GM12878 (cell line): ENCODE measurements at regions of chr2 and their contacts with region 1.

Region 1: DNA sequence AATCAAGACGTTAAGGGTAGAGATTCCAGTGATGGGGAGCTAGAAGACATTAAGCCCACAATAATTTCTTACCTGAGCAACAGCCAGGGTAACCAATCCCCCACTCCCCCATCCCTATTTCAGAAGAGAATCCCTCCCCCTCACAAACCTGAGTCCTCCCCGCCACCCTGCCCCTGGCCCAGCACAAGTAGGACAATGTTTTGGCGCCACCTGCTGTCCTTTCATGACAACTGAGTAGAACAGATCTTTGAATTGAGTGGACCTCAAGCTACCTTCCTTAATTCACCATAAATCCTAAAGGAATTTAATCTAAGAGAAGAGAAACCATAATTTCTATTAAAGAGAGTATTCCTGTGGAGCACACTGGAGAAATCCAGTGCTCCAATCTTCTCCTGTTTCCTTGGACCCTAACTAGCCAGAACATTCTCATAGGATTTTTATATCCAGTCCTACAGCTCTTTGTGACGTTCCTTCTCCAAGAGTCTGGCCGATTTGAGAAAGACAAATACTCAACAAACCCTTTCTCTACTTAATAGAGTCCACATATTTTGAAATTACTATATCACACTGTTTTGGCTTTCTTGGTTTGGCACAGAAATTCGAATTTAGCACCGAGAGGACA is 41.1 kb downstream of the NHEJ1 start:
- DNase-seq: peak; percentile 5
- ATAC-seq: peak; percentile 89
- H3K4me3 ChIP-seq: no peak overlapping the region
- H3K27ac ChIP-seq: no peak overlapping the region
- H3K4me1 ChIP-seq: no peaks in the 10 kb centered on the region
- H3K27me3 ChIP-seq: no peaks in the 10 kb centered on the region
- CTCF ChIP-seq: peak; percentile 68 to 74 (median 71)
- EP300 ChIP-seq: no peak
- POLR2A ChIP-seq: no peak
- RAD21 ChIP-seq: peak; percentile 90

Region 2: GRCh38 chr2:219057709-219058540 is 61.6 kb before region 1 on chr2:
- CTCF ChIA-PET with region 1: interaction called, 60 read pairs
- POLR2A ChIA-PET with region 1: no interaction called
- RAD21 ChIA-PET with region 1: interaction called, 24 read pairs
- SMC1A ChIA-PET with region 1: interaction called, 14 read pairs
- in situ Hi-C with region 1: loop called (anchors 5 kb)
- intact Hi-C with region 1: loop called (anchors 1 kb)
- DNase-seq: no peak
- ATAC-seq: peak; percentile 99
- H3K4me3 ChIP-seq: no peak overlapping the region
- H3K27ac ChIP-seq: no peak overlapping the region
- H3K4me1 ChIP-seq: no peaks in the 10 kb centered on the region
- H3K27me3 ChIP-seq: peaks cover 23 to 26% of the 10 kb centered on the region in 2 experiments
- CTCF ChIP-seq: peak; percentile 80 to 93 (median 82)
- EP300 ChIP-seq: no peak
- POLR2A ChIP-seq: no peak
- RAD21 ChIP-seq: peak; percentile 84

Region 3: DNA sequence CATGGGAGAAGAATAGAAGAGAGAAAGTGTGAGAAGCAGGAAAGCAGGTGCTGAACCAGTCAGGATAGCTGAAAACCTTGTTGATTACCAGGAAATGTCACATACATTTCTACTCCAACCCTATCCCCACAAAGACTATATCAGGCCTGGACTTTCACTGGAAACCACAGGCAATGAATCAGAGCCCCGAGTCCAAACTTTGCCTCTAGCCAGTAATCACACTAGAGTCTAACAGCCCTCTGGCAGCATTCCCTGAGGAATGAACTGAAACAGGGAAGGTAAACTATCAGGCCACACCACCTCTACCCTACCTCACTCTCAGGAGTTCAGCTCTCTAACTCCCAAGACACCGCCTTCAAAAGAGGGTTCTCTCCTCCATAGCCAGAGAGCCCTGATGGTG is 40.1 kb before region 1 on chr2:
- CTCF ChIA-PET with region 1: interaction called, 281 read pairs
- POLR2A ChIA-PET with region 1: no interaction called
- RAD21 ChIA-PET with region 1: interaction called, 55 read pairs
- SMC1A ChIA-PET with region 1: interaction called, 115 read pairs
- in situ Hi-C with region 1: no loop called
- intact Hi-C with region 1: no loop called
- DNase-seq: no peak
- ATAC-seq: no peak
- H3K4me3 ChIP-seq: no peak overlapping the region
- H3K27ac ChIP-seq: no peak overlapping the region
- H3K4me1 ChIP-seq: peaks cover 6% of the 10 kb centered on the region
- H3K27me3 ChIP-seq: no peaks in the 10 kb centered on the region
- CTCF ChIP-seq: no peak
- EP300 ChIP-seq: no peak
- POLR2A ChIP-seq: no peak
- RAD21 ChIP-seq: no peak

Region 4: DNA sequence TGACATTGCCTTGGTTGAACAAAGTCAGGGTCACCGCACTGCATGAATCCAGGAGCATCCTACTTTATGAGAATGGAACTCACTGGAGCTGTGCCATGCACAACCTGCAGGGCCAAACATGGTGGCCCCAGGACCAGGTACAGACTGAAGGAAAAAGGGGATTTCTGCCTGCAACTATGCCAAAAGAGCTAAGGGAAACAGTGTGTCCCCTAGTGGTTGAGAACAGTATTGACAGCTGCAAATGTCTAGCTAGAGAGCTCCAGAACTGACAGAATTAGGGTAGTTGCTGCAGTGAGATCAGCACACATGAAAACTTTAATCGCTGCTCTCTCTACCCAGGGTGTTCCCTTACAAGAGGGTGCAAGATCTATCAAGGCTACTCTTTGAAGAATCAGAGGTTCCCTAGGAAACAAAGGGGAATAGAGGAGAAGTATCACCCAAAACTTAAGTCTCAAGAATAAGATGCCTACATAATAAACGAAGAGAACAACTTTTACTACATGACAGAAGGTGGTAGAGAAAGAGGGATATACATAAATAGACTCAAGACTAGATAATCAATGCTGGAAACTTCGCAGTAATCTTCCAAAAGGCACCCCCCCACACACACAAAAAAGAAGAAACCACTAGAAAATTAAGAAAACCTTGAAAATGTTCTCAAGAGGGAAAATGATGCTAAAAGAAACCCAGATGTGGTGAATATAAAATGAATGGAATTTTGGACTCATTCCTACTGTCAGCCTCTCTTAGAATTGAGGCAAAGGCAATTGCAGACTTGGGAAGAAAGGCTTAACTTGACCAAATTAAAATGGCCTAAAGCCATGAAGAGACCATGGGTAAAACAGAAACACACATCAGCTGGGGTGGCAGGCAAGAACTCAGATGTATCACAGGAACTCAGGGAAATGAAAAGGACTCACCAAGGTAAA is 15.2 kb before region 1 on chr2:
- CTCF ChIA-PET with region 1: interaction called, 105 read pairs
- POLR2A ChIA-PET with region 1: no interaction called
- RAD21 ChIA-PET with region 1: interaction called, 17 read pairs
- SMC1A ChIA-PET with region 1: interaction called, 10 read pairs
- in situ Hi-C with region 1: no loop called
- intact Hi-C with region 1: no loop called
- DNase-seq: no peak
- ATAC-seq: peak; percentile 97
- H3K4me3 ChIP-seq: no peak overlapping the region
- H3K27ac ChIP-seq: no peak overlapping the region
- H3K4me1 ChIP-seq: no peaks in the 10 kb centered on the region
- H3K27me3 ChIP-seq: no peaks in the 10 kb centered on the region
- CTCF ChIP-seq: peak; percentile 70 to 95 (median 90)
- EP300 ChIP-seq: no peak
- POLR2A ChIP-seq: no peak
- RAD21 ChIP-seq: peak; percentile 54

Region 5: DNA sequence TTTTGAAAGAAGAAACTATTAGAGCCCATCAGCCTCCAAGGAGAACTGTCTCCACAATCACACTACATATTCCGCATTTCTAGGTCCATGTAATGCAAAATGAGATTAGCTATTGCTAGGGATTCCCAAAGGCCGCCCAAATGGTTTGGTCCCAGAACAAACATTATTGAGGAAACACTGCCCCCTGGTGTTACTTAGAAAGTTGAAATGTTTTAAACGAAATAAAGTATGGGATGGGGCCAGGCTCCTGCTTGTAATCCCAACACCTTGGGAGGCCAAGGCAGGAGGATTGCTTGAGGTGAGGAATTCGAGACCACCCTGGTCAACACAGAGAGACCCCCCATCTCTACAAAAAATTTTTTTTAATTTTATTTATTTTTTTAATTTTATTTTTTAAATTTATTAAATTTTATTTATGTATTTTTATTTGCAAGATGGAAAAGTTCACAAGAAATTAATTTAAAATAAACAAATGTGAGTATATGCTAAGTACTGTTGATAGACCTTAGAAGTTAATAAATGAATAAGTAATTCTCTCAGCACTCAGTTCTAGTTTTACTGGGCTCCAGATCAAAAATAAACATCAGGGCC is 35.6 kb after region 1 on chr2:
- CTCF ChIA-PET with region 1: interaction called, 63 read pairs
- POLR2A ChIA-PET with region 1: no interaction called
- RAD21 ChIA-PET with region 1: interaction called, 16 read pairs
- SMC1A ChIA-PET with region 1: interaction called, 33 read pairs
- in situ Hi-C with region 1: no loop called
- intact Hi-C with region 1: no loop called
- DNase-seq: no peak
- ATAC-seq: peak; percentile 77
- H3K4me3 ChIP-seq: no peak overlapping the region
- H3K27ac ChIP-seq: no peak overlapping the region
- H3K4me1 ChIP-seq: peaks cover 4% of the 10 kb centered on the region; the same call in 1 of the 2 replicates
- H3K27me3 ChIP-seq: no peaks in the 10 kb centered on the region
- CTCF ChIP-seq: peak; percentile 37 to 66 (median 39); a peak in 5 of 6 replicates
- EP300 ChIP-seq: no peak
- POLR2A ChIP-seq: no peak
- RAD21 ChIP-seq: peak; percentile 78